ENCODE measurements at regions of chr16 and their contacts with region 1.

Region 1: GRCh38 chr16:69064764-69065313 is 40.6 kb upstream of the HAS3 start:
- DNase-seq: peak; percentile 49 to 83
- ATAC-seq: peak; percentile 64 to 81
- H3K4me3 ChIP-seq: no peak overlapping the region
- H3K27ac ChIP-seq: peak overlapping the region; percentile 74 to 85 (median 83)
- H3K4me1 ChIP-seq: peaks cover 16 to 17% of the 10 kb centered on the region in 2 donors
- H3K27me3 ChIP-seq: no peaks in the 10 kb centered on the region
- CTCF ChIP-seq: no peak
- POLR2A ChIP-seq: peak in 1 of 2 donors; percentile 36

Region 2: GRCh38 chr16:69100071-69100691 is 35.3 kb after region 1 on chr16:
- in situ Hi-C with region 1: no loop called
- intact Hi-C with region 1: loop called (anchors 5 kb)
- DNase-seq: no peak
- ATAC-seq: no peak
- H3K4me3 ChIP-seq: no peak overlapping the region
- H3K27ac ChIP-seq: no peak overlapping the region
- H3K4me1 ChIP-seq: no peaks in the 10 kb centered on the region
- H3K27me3 ChIP-seq: no peaks in the 10 kb centered on the region
- CTCF ChIP-seq: no peak
- POLR2A ChIP-seq: no peak

Measured in gastrocnemius medialis (tissue), 4 donors.